Heart right ventricle (tissue), 16 donors: ENCODE measurements at regions of chr17 and their contacts with region 1.

Region 1: DNA sequence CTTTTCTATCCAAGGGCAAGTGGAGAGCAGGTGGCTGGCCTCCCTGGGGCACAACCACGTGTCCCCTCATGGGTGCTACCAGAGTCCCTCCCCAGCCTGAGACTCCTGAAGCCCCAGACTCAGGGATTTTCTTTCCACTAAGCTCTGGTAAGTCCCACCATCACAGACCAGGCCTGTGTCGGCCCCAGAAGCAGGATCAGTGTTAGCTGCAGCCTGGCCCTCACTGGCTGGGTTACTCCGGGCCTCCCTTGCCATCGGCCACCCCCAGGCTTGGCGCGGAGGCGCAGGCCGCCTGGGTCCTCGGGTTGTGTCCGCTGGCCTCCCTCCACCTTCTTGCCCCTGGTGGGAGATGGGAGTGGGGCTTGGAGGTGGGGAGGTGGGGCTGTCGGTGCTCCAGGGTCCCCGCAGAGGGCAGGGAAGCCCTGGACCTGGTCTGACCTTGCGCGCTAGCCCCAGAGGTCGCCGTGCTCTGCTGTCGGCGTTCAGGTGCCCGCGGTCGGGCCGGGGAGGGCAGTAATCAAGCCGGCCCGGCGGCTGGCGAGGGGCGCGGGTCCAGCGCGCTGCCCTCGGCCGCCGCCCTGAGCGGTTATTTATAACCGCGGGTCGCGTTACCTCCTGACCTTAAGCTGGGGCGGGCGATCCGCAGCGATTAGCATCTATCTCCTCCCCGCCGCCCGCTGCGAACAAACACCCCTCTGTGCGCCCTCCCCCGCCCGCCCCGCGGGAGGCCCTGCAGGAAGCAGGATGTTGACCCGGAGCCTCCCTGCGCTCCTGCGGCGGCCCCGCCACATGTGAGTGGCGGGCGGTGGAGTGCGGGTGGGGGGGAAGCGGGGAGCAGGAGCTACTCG is 78.1 kb upstream of the TOB1 start:
- DNase-seq: peak; percentile 88 to 89
- ATAC-seq: peak; percentile 82 to 93 (median 86)
- H3K4me3 ChIP-seq: peak overlapping the region; percentile 47 to 69 (median 61)
- H3K27ac ChIP-seq: peak overlapping the region; percentile 92 to 99 (median 98)
- H3K4me1 ChIP-seq: peaks cover 11 to 65% (median 37%) of the 10 kb centered on the region in 9 donors
- H3K27me3 ChIP-seq: no peaks in the 10 kb centered on the region
- CTCF ChIP-seq: peak in 3 of 9 donors; percentile 5 to 9 (median 9)

Region 2: GRCh38 chr17:50861071-50861676 is 83.1 kb before region 1 on chr17:
- intact Hi-C with region 1: loop called in 6 of 10 experiments (anchors 1 to 5 kb)
- DNase-seq: no peak
- ATAC-seq: no peak
- H3K4me3 ChIP-seq: peak overlapping the region in 4 of 10 donors; percentile 1 to 91 (median 84)
- H3K27ac ChIP-seq: peak overlapping the region in 3 of 10 donors; percentile 22 to 28 (median 23)
- H3K4me1 ChIP-seq: peaks cover 0 to 48% (median 29%) of the 10 kb centered on the region in 9 donors
- H3K27me3 ChIP-seq: no peaks in the 10 kb centered on the region
- CTCF ChIP-seq: no peak

Region 3: DNA sequence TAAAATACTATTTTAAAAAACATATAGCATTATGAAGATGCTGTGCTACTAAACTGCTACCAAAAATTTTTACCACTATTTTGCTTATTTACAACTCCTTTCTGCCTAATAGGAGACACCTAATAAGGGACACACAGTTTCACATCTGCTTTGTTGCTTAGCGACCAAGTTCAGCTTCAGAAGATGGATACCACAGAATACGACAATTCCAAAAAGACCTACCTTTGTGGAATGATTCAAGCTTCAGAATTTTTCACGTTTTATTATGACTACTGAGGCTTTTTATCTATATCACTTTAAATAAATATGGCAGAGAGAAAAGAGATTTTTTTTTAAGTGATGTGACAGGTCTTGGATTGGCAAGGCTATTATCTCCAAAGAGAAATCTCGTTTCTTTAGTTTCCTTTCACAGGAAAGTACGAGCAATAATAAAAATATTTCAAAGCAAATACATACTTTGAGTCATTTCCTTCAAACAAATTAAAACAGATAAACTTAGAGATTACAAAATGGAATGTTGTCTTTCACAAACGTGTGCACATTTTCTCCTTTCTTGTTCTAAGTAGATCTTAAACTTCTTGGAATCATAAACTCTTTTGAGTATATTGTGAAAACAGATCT is 141.0 kb after region 1 on chr17:
- intact Hi-C with region 1: no loop called
- DNase-seq: no peak
- ATAC-seq: no peak
- H3K4me3 ChIP-seq: no peak overlapping the region
- H3K27ac ChIP-seq: no peak overlapping the region
- H3K4me1 ChIP-seq: peaks cover 0 to 38% (median 15%) of the 10 kb centered on the region in 9 donors
- H3K27me3 ChIP-seq: no peaks in the 10 kb centered on the region
- CTCF ChIP-seq: no peak